Activated naive CD8-positive, alpha-beta T cell treated with anti-CD3 and anti-CD28 coated beads, Interleukin-2, amount 10 ng/mL, durations not matched to agents 7 days and 5 days (primary cell): ENCODE measurements at regions of chr13 and their contacts with region 1.

Region 1: DNA sequence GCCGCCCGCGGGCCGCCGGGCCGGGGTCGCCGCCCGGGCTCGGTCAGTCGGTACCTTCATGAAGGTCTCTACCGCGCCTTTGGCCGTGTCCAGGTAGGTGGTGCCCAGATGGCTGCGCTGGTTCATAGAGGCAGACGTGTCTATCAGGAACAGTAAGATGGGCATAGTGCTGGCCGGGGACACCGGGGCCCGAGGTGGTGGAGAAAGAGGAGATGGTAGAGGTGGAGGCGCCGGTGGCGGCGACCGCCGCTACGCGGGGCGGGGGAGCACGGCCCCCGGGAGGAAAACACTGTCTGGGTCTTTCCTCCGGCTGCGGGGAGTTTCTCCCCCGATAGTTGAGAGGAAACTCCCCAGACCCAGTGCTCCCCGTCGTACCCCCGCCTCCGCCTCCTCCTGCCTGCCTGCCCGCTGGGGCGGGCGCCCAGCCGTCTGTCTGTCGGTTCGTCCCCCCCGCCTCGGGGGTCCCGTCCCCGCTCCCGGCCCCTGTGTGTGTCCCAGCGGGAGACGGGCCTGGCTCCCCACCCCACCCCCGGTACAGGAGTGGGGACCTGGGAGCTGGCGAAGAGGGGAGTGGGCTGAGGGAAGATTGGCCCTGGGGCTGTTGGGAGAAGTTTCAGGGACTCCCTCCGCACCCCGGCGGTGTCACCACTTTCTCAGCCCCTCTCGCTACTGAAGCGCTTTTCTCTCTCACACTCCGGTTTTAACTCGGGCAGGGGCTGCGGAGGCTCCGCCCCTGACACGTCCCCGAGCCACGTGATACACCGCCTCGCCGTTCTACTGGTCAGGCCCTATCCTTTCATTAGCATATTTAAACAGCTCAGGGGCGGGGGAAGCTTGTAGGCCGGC is at the start of gene INTS6:
- DNase-seq: peak; percentile 97
- ATAC-seq: peak; percentile 83
- H3K4me3 Mint-ChIP-seq: peak within 1 kb of the TSS; percentile 93
- H3K27ac Mint-ChIP-seq: peak within 1 kb of the TSS; percentile 98
- H3K4me1 Mint-ChIP-seq: peaks cover 32% of the 10 kb centered on the region
- H3K27me3 Mint-ChIP-seq: no peaks in the 10 kb centered on the region
- total RNA-seq, gene INTS6: 45.5 to 49.7 TPM

Region 2: GRCh38 chr13:51348069-51348967 is 104.3 kb before region 1 on chr13:
- POLR2A ChIA-PET with region 1: no interaction called
- DNase-seq: no peak
- ATAC-seq: no peak
- H3K4me3 Mint-ChIP-seq: no peak overlapping the region
- H3K27ac Mint-ChIP-seq: no peak overlapping the region
- H3K4me1 Mint-ChIP-seq: peaks cover 1% of the 10 kb centered on the region
- H3K27me3 Mint-ChIP-seq: no peaks in the 10 kb centered on the region

Region 3: GRCh38 chr13:51475727-51476501 is 23.3 kb after region 1 on chr13:
- POLR2A ChIA-PET with region 1: interaction called, 18 read pairs
- DNase-seq: no peak
- ATAC-seq: no peak
- H3K4me3 Mint-ChIP-seq: no peak overlapping the region
- H3K27ac Mint-ChIP-seq: no peak overlapping the region
- H3K4me1 Mint-ChIP-seq: peaks cover 6% of the 10 kb centered on the region
- H3K27me3 Mint-ChIP-seq: peaks cover 3% of the 10 kb centered on the region

Region 4: DNA sequence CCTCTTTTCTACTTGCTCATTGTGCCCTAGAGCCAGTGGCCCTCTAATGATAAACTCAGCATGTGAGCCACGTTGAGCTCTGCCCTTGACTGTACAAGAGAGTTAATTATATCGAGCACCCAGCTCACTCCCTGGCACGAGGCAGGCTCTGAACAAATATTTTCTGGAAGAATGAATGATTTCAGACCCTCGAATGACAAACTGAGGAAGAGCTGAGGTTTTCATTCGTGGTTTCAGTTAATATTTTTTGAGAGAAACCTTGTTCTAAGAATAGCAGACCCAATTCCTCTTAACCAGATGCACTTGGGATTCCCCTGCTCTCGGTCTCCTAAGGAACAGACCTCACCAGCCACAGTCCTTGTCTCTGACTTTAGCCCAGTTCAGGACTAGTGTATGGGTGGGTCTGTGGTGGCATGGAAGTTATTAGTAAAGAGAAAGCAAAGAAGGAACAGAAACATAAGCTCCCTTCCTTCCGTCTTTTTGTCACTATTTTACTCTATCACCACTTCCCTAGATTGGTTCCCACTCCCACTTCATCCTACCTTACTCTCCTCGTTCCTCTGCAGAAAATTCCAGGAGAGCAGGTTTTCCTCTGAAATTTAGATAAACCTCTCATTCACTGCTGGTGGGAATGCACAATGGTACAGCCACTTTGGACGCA is 109.6 kb after region 1 on chr13:
- POLR2A ChIA-PET with region 1: interaction called, 11 read pairs
- DNase-seq: no peak
- ATAC-seq: peak; percentile 56
- H3K4me3 Mint-ChIP-seq: peak overlapping the region; percentile 19
- H3K27ac Mint-ChIP-seq: no peak overlapping the region
- H3K4me1 Mint-ChIP-seq: peaks cover 31% of the 10 kb centered on the region
- H3K27me3 Mint-ChIP-seq: no peaks in the 10 kb centered on the region

Region 5: DNA sequence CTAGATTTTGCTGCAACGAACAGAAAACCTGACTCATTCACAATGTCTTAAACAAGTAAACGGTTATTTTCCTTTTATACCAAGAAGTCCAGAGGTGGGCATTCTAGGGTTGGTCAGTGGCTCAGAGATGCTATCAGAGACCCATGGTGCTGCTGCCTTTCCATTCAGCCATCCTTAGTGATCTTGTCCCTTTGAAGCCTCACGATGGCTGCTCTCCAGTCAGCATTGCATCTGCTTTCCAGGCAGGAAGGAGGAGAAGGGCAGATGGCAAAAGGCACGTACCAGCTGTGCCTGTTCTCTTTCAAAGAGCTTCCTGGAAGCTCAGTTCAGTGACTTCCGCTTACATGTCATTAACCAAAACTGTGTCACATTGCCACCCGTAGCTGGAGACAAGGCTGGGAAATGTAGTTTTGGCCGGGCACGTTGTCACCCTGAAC is 161.8 kb after region 1 on chr13:
- POLR2A ChIA-PET with region 1: interaction called, 32 read pairs
- DNase-seq: peak; percentile 49
- ATAC-seq: peak; percentile 93
- H3K4me3 Mint-ChIP-seq: peak overlapping the region; percentile 90
- H3K27ac Mint-ChIP-seq: peak overlapping the region; percentile 94
- H3K4me1 Mint-ChIP-seq: peaks cover 17% of the 10 kb centered on the region
- H3K27me3 Mint-ChIP-seq: no peaks in the 10 kb centered on the region

Region 6: DNA sequence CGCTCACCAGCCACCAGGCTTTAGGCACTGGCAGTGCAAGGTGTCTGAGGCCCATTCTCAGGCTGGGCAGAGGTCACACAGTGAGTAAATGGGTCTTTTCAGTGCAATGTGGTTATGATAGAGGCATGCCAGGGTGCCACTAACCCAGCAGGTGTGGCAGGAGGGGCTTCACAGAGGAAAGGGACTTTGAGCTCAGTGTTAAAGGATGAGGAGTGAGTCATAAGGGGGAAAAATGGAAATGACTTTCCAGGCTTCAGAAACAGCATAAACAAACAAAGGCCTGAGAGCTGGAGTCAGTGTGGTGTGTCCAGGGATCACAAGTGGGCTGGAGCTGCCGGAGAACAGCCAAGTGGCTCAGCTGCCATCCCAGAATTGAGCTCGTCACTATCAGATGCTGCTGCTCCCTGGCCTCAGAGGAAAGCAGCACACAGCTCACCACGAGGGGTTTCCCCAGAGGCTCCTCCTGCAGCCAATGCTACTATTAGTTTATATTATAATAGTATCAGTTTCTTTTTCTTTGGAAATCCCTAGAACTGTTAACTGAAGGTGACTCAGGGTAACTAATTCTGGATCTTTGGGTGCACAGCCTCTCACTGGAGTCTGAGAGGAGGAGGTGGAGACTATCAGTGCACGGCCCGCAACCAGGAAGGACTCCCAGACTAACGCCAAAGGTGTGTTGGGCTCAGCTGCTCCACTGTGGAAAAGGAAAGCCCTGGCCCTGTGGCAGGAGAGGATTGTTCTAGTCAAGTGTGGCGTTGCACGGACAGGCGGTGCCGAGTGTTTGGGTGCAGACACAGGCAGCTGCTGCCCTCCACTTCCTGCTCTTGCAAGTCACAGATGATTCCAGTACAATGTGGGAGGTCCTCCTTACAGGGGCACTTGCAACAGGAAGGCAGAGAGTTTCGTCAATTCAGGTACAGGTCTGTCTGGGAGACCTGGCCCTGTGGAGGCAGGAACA is 311.9 kb after region 1 on chr13:
- POLR2A ChIA-PET with region 1: interaction called, 19 read pairs
- DNase-seq: peak; percentile 58
- ATAC-seq: peak; percentile 84
- H3K4me3 Mint-ChIP-seq: peak overlapping the region; percentile 79
- H3K27ac Mint-ChIP-seq: peak overlapping the region; percentile 94
- H3K4me1 Mint-ChIP-seq: peaks cover 15% of the 10 kb centered on the region
- H3K27me3 Mint-ChIP-seq: no peaks in the 10 kb centered on the region

Region 7: DNA sequence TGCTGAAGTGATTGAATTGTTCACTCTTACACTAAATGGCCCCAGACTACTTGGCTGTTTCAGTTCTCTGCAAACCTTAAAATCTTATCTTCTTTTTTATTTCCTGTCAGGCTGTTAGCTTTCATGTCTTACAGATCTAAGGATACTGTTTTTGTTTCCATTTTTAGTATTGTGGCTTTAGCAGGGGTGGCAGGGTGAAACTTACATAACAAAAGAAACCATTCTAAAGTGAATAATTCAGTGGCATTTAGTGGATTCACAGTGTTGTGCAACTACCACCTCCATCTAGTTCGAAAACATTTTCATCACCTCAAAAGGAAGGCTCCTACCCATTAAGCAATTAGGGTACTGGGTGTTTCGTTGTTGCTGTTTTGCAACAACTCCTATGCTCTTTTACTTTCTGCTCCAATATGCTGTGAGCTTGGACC is 372.6 kb after region 1 on chr13:
- POLR2A ChIA-PET with region 1: interaction called, 16 read pairs
- DNase-seq: no peak
- ATAC-seq: peak; percentile 55
- H3K4me3 Mint-ChIP-seq: peak overlapping the region; percentile 74
- H3K27ac Mint-ChIP-seq: peak overlapping the region; percentile 88
- H3K4me1 Mint-ChIP-seq: peaks cover 73% of the 10 kb centered on the region
- H3K27me3 Mint-ChIP-seq: no peaks in the 10 kb centered on the region